AG04449 (cell line): ENCODE measurements at regions of chr15 and their contacts with region 1.

Region 1: GRCh38 chr15:99250494-99251435 is 516 bp upstream of the LRRC28 start:
- DNase-seq: peak; percentile 88
- H3K4me3 ChIP-seq: peak overlapping the region; percentile 86
- CTCF ChIP-seq: no peak

Region 2: DNA sequence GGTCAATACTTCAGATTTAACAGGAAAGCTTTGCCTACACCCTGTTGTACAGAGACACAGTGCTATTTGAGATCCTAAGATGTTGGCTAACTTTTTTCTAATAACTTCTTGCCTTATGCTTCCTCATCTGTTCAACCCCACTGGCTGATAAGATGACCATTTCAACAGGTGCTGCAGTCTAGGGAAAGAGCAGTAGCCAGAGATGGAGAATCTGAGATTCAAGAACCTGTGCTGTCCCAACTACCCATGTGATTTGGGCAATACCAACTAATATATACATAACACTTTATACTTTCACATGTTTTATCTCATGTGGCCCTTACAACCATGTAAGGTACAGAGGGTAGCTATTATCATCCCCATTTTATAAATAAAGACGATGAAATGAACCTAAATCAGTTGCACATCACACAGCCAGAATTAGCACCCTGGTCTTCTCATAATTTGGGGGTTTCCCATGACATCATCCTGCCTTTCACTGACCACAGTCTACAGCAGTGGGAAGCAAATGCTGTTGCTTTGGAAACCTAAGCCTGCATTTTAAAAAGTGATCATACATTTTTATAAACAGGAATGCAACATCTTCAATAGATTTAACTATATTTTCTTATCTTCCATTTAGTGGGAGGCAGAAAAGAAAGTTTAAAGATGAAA is 11.1 kb before region 1 on chr15:
- CTCF ChIA-PET with region 1: no interaction called
- POLR2A ChIA-PET with region 1: no interaction called
- DNase-seq: no peak
- H3K4me3 ChIP-seq: no peak overlapping the region
- CTCF ChIP-seq: no peak

Region 3: DNA sequence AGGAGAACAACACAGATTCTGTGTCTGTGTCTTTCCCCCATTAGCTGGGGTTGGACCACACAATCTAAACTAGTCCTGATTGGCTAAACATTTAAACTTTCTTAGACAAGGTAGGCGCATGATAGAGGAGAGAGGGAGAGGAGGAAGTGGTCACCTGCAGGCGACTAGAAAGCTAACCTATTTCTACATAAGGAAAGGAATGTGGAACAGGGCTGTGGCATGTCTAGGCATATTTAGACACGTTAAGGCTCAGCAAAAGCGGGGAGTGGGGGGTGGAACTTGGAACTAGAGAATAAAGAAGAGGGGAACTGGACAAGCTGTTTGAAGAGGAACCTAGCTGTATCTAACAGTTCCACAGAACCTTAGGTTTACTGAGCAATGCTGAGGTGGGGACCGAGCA is 13.4 kb after region 1 on chr15:
- CTCF ChIA-PET with region 1: interaction called, 13 read pairs
- POLR2A ChIA-PET with region 1: interaction called, 3 read pairs
- DNase-seq: no peak
- H3K4me3 ChIP-seq: no peak overlapping the region
- CTCF ChIP-seq: no peak